B cell (primary cell): ENCODE measurements at regions of chr1 and their contacts with region 1.

Region 1: DNA sequence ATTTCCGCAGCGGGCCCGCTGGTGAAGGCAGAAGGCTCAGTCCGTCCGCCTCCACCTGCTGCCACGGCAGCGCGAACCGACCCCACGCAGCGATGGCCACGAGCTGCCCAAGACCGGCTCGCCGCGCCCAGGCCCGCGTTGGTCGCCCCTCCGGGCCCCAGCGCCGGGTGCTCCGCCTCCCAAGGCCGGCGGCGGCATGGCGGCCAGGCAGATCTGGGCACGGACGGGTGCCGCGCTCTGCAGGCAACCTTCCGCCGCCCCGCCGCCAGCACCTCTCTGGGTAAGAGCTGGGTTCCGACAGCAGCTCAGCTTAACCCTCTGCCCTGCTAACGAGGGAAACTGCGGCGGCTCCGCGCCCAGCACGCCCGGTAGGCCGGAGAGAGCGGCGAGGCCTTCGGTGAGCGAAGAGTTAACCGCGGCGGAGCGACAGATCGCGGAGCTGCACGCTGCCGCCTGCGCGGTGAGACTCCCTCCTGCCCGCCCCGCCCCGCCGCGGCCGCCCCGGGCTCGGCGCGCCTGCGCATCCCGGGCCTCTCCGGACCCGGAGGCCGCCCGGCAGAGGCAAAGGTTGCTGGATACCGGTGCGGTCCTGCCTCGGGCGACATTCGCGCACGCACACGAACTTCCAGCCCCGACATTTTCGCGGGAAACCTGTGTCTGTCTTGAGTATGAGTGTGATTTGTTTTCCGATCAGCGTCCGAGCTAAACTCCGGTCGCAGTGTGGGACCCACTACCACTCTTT is at the start of gene C1orf53:
- DNase-seq: peak; percentile 88
- ATAC-seq: peak; percentile 93
- H3K4me3 ChIP-seq: peak within 1 kb of the TSS; percentile 59 to 84 (median 77)
- H3K4me3 Mint-ChIP-seq: peak within 1 kb of the TSS; percentile 98
- H3K27ac ChIP-seq: peak within 1 kb of the TSS; percentile 39 to 61
- H3K27ac Mint-ChIP-seq: peak within 1 kb of the TSS; percentile 90
- H3K4me1 ChIP-seq: peaks cover 13 to 17% of the 10 kb centered on the region in 2 donors
- H3K4me1 Mint-ChIP-seq: peaks cover 17% of the 10 kb centered on the region
- H3K27me3 ChIP-seq: peaks cover 1 to 43% (median 34%) of the 10 kb centered on the region in 4 experiments
- H3K27me3 Mint-ChIP-seq: peaks cover 52% of the 10 kb centered on the region
- CTCF ChIP-seq: no peak
- total RNA-seq, gene C1orf53: not detected in 2 replicates

Region 2: DNA sequence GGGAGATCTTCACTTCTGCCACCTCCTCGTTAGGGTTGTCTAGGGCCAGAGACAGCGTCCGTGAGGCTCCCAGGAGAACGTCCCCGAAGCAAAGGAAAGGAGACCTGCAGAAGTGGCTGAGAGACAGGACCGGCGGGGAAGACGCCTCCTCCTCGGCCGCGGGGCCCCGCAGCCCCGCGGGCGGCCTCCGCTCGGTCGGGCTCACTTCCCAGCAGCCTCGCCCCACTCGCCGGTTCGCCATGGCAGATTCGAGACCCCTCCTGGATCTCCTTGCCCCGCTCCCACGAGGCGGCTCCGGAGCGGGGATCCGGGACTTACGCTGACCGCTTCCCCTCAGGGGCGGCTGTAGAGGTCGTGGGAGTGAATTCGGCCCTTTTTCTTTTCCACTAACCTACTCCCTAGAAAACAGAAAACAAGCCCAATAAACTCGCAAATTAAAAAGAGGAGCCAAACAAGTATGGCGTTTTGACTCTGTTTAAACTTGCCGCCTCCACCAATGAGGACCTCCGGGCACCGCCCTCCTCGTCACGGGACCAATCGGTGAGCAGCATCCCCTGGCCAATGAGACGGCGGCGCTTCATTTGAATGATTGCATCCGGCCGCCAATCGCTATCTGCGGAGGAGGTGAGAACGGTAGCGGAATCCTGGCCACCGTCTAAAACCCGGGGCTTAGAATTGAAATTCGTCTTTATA is 756.3 kb before region 1 on chr1 and contains the start of gene ASPM:
- CTCF ChIA-PET with region 1: no interaction called
- POLR2A ChIA-PET with region 1: no interaction called
- intact Hi-C with region 1: loop called (anchors 10 kb)
- DNase-seq: peak; percentile 94
- ATAC-seq: peak; percentile 100
- H3K4me3 ChIP-seq: peak within 1 kb of the TSS; percentile 64 to 88 (median 83)
- H3K4me3 Mint-ChIP-seq: peak within 1 kb of the TSS; percentile 92
- H3K27ac ChIP-seq: peak within 1 kb of the TSS; percentile 26 to 60
- H3K27ac Mint-ChIP-seq: peak within 1 kb of the TSS; percentile 69
- H3K4me1 ChIP-seq: peaks cover 5 to 11% of the 10 kb centered on the region in 2 donors
- H3K4me1 Mint-ChIP-seq: peaks cover 31% of the 10 kb centered on the region
- H3K27me3 ChIP-seq: peaks cover 0 to 4% (median 2%) of the 10 kb centered on the region in 4 experiments
- H3K27me3 Mint-ChIP-seq: peaks cover 3% of the 10 kb centered on the region
- CTCF ChIP-seq: no peak
- total RNA-seq, gene ASPM: 0.19 and 0.27 TPM in 2 replicates

Region 3: DNA sequence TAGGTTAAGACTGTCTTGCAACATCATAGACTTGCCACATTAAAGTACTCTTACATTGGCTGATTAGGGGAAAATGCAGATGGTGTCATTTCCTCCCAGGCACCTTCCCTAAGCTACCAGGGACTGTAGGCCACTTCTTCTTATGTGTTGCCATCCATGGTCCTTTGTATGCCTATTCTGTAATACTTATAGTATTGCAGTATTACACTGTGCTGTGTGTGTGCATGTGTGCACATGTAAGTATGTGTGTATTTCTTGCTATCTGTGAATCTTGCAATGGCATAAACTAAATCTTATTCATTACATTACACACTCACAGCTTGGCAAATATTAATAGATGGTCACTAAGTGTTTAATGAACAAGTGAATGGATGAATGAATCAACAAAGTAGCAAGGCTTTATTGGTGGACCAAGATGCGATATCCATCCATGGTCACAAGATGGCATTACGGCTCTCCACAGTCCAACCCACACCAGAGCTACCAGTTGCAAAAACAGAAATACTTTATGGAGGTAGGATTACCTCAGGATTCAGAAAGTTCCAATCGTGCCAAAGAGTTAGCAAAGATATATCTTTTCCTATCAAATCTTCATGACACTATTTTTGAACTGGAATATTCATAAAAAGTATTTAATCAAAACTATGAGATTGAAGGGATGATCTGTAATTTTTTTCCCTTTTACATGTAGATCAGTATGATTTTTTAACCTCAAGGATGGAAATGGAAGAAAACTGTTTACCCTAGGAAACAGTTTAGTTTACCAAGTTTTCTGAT is 287.5 kb before region 1 on chr1:
- CTCF ChIA-PET with region 1: interaction called, 15 read pairs
- POLR2A ChIA-PET with region 1: no interaction called
- intact Hi-C with region 1: no loop called
- DNase-seq: peak; percentile 42
- ATAC-seq: peak; percentile 49
- H3K4me3 ChIP-seq: no peak overlapping the region
- H3K4me3 Mint-ChIP-seq: no peak overlapping the region
- H3K27ac ChIP-seq: no peak overlapping the region
- H3K27ac Mint-ChIP-seq: no peak overlapping the region
- H3K4me1 ChIP-seq: no peaks in the 10 kb centered on the region
- H3K4me1 Mint-ChIP-seq: no peaks in the 10 kb centered on the region
- H3K27me3 ChIP-seq: no peaks in the 10 kb centered on the region
- H3K27me3 Mint-ChIP-seq: no peaks in the 10 kb centered on the region
- CTCF ChIP-seq: peak; percentile 70

Region 4: GRCh38 chr1:197775282-197776262 is 127.1 kb before region 1 on chr1 and contains the start of gene DENND1B:
- CTCF ChIA-PET with region 1: no interaction called
- POLR2A ChIA-PET with region 1: no interaction called
- intact Hi-C with region 1: loop called (anchors 2 kb)
- DNase-seq: peak; percentile 90
- ATAC-seq: peak; percentile 74
- H3K4me3 ChIP-seq: peak within 1 kb of the TSS; percentile 55 to 78 (median 67)
- H3K4me3 Mint-ChIP-seq: peak within 1 kb of the TSS; percentile 89
- H3K27ac ChIP-seq: peak within 1 kb of the TSS; percentile 86 to 89
- H3K27ac Mint-ChIP-seq: peak within 1 kb of the TSS; percentile 99
- H3K4me1 ChIP-seq: peaks cover 28 to 47% of the 10 kb centered on the region in 2 donors
- H3K4me1 Mint-ChIP-seq: peaks cover 68% of the 10 kb centered on the region
- H3K27me3 ChIP-seq: no peaks in the 10 kb centered on the region
- H3K27me3 Mint-ChIP-seq: no peaks in the 10 kb centered on the region
- CTCF ChIP-seq: peak; percentile 15
- total RNA-seq, gene DENND1B: 24.8 and 25.4 TPM in 2 replicates

Region 5: DNA sequence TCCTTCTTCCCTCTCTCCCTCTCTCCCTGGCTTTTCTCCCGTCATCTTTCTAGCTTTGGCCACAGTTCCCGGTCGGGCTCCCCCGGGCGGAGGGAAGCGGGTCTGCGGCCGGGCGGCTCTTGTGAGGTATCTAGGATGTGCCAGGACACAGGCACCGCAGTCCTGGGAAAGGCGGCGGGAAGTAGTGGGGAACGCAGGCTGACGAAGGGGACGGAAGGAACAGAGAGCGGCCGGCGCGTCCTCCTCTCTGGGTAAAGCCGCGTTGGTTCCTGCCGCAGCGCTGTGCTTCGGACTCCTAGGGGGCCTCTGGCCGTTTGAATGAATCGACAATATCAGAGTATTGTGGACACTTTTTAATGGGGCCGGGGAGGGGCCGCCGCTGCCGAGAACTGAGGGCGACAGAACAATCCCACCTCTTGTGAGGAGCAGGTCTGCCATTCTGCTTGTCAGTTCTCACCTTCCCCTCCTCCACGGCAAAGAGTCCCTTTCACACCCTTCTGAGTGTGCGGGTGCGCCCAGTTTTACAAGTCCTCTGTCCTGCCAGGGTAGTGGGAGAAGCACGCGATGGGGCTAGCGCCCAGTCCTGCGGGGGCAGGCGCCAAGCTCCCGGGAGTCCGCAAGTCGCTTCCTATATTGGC is 13.4 kb after region 1 on chr1:
- CTCF ChIA-PET with region 1: interaction called, 11 read pairs
- POLR2A ChIA-PET with region 1: interaction called, 10 read pairs
- intact Hi-C with region 1: loop called (anchors 2 kb)
- DNase-seq: peak; percentile 61
- ATAC-seq: no peak
- H3K4me3 ChIP-seq: peak overlapping the region in 2 of 5 experiments; percentile 5 to 52
- H3K4me3 Mint-ChIP-seq: peak overlapping the region; percentile 85
- H3K27ac ChIP-seq: no peak overlapping the region
- H3K27ac Mint-ChIP-seq: no peak overlapping the region
- H3K4me1 ChIP-seq: peaks cover 87 to 96% of the 10 kb centered on the region in 2 donors
- H3K4me1 Mint-ChIP-seq: peaks cover 88% of the 10 kb centered on the region
- H3K27me3 ChIP-seq: peaks cover 0 to 99% (median 92%) of the 10 kb centered on the region in 4 experiments
- H3K27me3 Mint-ChIP-seq: peaks cover 89% of the 10 kb centered on the region
- CTCF ChIP-seq: no peak